Natural killer cell (primary cell): ENCODE measurements at regions of chr19 and their contacts with region 1.

Region 1: GRCh38 chr19:36169084-36169760 is 17.0 kb upstream of the COX7A1 start:
- DNase-seq: no peak
- ATAC-seq: no peak
- H3K4me3 ChIP-seq: no peak overlapping the region
- H3K4me3 Mint-ChIP-seq: no peak overlapping the region
- H3K27ac ChIP-seq: no peak overlapping the region
- H3K27ac Mint-ChIP-seq: no peak overlapping the region
- H3K4me1 ChIP-seq: peaks cover 5% of the 10 kb centered on the region
- H3K4me1 Mint-ChIP-seq: peaks cover 0 to 5% of the 10 kb centered on the region in 2 donors
- H3K27me3 ChIP-seq: no peaks in the 10 kb centered on the region
- H3K27me3 Mint-ChIP-seq: no peaks in the 10 kb centered on the region
- CTCF ChIP-seq: no peak

Region 2: DNA sequence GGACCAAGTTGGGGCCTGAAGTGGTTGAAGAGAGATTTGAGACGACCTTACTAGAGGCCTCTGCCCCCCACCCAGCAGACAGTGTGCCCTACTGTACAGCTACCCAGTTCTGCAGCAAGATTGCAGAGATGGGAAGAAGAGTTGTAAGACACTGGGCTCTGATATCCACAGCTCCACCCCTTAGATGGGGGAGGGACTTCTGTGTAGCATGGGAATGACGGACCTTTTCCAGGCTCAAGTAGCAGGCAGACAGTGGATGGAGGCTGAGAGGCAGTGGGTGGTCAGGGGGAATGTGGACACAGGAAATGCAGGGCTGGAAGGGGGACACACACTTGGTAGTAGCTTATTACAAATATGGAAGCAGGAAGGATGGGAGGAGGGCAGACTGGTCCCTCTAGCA is 220.1 kb before region 1 on chr19:
- intact Hi-C with region 1: loop called (anchors 5 kb)
- DNase-seq: no peak
- ATAC-seq: no peak
- H3K4me3 ChIP-seq: no peak overlapping the region
- H3K4me3 Mint-ChIP-seq: no peak overlapping the region
- H3K27ac ChIP-seq: no peak overlapping the region
- H3K27ac Mint-ChIP-seq: peak overlapping the region in 1 of 2 donors; percentile 68
- H3K4me1 ChIP-seq: peaks cover 30% of the 10 kb centered on the region
- H3K4me1 Mint-ChIP-seq: peaks cover 20 to 40% of the 10 kb centered on the region in 2 donors
- H3K27me3 ChIP-seq: no peaks in the 10 kb centered on the region
- H3K27me3 Mint-ChIP-seq: no peaks in the 10 kb centered on the region
- CTCF ChIP-seq: no peak

Region 3: GRCh38 chr19:36132489-36132891 is 36.7 kb before region 1 on chr19:
- intact Hi-C with region 1: loop called (anchors 1 kb)
- DNase-seq: peak; percentile 33 to 47
- ATAC-seq: peak; percentile 38 to 65 (median 50)
- H3K4me3 ChIP-seq: no peak overlapping the region
- H3K4me3 Mint-ChIP-seq: peak overlapping the region; percentile 50
- H3K27ac ChIP-seq: peak overlapping the region; percentile 41
- H3K27ac Mint-ChIP-seq: peak overlapping the region; percentile 82 to 88
- H3K4me1 ChIP-seq: peaks cover 44% of the 10 kb centered on the region
- H3K4me1 Mint-ChIP-seq: peaks cover 26 to 43% of the 10 kb centered on the region in 2 donors
- H3K27me3 ChIP-seq: no peaks in the 10 kb centered on the region
- H3K27me3 Mint-ChIP-seq: no peaks in the 10 kb centered on the region
- CTCF ChIP-seq: no peak